ENCODE measurements at regions of chr6 and their contacts with region 1.

Region 1: GRCh38 chr6:156557251-156557910 is 219.8 kb upstream of the ARID1B start:
- DNase-seq: peak; percentile 41 to 79 (median 64)
- H3K4me3 ChIP-seq: peak overlapping the region in 27 of 59 donors; percentile 4 to 57 (median 26)
- H3K27ac ChIP-seq: peak overlapping the region in 56 of 59 donors; percentile 22 to 88 (median 72)
- H3K27me3 ChIP-seq: no peaks in the 10 kb centered on the region
- CTCF ChIP-seq: peak in 6 of 56 donors; percentile 10 to 34 (median 18)

Region 2: GRCh38 chr6:156197513-156197912 is 359.9 kb before region 1 on chr6:
- intact Hi-C with region 1: no loop called
- DNase-seq: no peak
- H3K4me3 ChIP-seq: no peak overlapping the region
- H3K27ac ChIP-seq: no peak overlapping the region
- H3K27me3 ChIP-seq: peaks cover 0 to 3% (median 0%) of the 10 kb centered on the region in 45 donors
- CTCF ChIP-seq: no peak

Region 3: GRCh38 chr6:156280065-156280464 is 277.3 kb before region 1 on chr6:
- intact Hi-C with region 1: loop called in 1 of 2 experiments (anchors 10 kb)
- DNase-seq: no peak
- H3K4me3 ChIP-seq: no peak overlapping the region
- H3K27ac ChIP-seq: no peak overlapping the region
- H3K27me3 ChIP-seq: no peaks in the 10 kb centered on the region
- CTCF ChIP-seq: no peak

Region 4: GRCh38 chr6:156427345-156427744 is 130.0 kb before region 1 on chr6:
- intact Hi-C with region 1: loop called in 1 of 2 experiments (anchors 10 kb)
- DNase-seq: peak in 8 of 10 donors; percentile 11 to 74 (median 48)
- H3K4me3 ChIP-seq: no peak overlapping the region
- H3K27ac ChIP-seq: peak overlapping the region in 17 of 59 donors; percentile 1 to 81 (median 33)
- H3K27me3 ChIP-seq: no peaks in the 10 kb centered on the region
- CTCF ChIP-seq: no peak

Region 5: GRCh38 chr6:157013649-157014304 is 456.4 kb after region 1 on chr6:
- intact Hi-C with region 1: no loop called
- DNase-seq: no peak
- H3K4me3 ChIP-seq: no peak overlapping the region
- H3K27ac ChIP-seq: peak overlapping the region in 1 of 59 donors; percentile 31
- H3K27me3 ChIP-seq: no peaks in the 10 kb centered on the region
- CTCF ChIP-seq: no peak